Naive thymus-derived CD4-positive, alpha-beta T cell (primary cell): ENCODE measurements at regions of chr2 and their contacts with region 1.

Region 1: DNA sequence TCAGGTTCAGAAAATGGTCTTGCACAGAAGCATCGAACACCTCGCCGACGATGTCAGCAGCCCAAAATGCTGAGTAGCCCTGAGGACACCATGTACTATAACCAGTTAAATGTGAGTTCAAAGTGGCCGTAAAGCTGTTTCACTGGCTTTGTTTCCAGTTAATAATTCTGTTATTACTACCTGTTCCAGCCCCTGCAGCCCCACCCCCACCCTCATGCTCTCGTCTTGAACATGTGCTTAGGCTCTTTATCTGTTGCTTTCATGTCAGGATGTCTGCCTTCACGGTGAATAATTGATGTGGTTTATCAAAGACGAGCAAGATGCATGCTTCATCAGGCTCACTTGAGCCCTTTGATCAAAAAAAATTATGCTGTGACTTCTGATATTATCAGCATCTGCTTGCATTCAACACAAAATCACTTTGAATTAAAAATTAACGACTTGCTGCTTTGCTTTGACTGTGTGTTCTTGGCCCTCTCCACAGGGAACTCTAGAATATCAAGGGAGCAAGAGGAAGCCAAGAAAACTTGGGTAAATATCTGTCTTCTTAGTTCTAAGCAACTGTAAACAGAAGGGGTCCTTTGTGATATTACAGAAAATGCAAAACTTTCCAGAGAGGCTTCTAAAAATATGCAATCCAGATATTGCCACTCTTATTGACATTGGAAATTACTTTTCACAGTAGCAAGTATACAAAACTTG is 63.4 kb upstream of the SP5 start:
- DNase-seq: peak in 7 of 9 donors; percentile 74 to 89 (median 84)
- ATAC-seq: peak; percentile 99
- H3K4me3 ChIP-seq: no peak overlapping the region
- H3K4me3 Mint-ChIP-seq: peak overlapping the region; percentile 44 to 80 (median 64)
- H3K27ac ChIP-seq: no peak overlapping the region
- H3K27ac Mint-ChIP-seq: peak overlapping the region in 7 of 9 donors; percentile 12 to 87 (median 25)
- H3K4me1 ChIP-seq: peaks cover 11 to 23% of the 10 kb centered on the region in 2 donors
- H3K4me1 Mint-ChIP-seq: peaks cover 17 to 35% (median 32%) of the 10 kb centered on the region in 7 donors
- H3K27me3 ChIP-seq: no peaks in the 10 kb centered on the region
- H3K27me3 Mint-ChIP-seq: peaks cover 0 to 20% (median 9%) of the 10 kb centered on the region in 5 donors

Region 2: DNA sequence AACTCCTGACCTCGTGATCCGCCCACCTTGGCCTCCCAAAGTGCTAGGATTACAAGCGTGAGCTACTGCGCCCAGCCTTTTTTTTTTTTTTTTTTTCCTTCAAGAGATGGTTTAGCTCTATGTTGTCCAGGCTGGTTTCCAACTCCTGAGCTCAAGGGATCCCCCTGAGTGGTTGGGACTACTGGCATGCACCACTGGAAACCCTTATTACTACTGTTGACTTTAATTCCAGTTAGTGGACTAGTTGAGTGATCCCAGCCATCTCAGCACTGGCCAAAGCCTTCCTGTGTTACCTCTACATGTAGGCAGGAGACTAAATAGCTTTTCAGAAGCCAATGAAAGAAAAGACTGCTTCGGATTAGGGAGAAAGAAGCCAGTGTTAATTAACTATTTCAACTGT is 861.2 kb before region 1 on chr2:
- CTCF ChIA-PET with region 1: no interaction called
- POLR2A ChIA-PET with region 1: no interaction called
- intact Hi-C with region 1: no loop called
- DNase-seq: no peak
- ATAC-seq: no peak
- H3K4me3 ChIP-seq: no peak overlapping the region
- H3K4me3 Mint-ChIP-seq: no peak overlapping the region
- H3K27ac ChIP-seq: no peak overlapping the region
- H3K27ac Mint-ChIP-seq: no peak overlapping the region
- H3K4me1 ChIP-seq: no peaks in the 10 kb centered on the region
- H3K4me1 Mint-ChIP-seq: peaks cover 4 to 6% (median 6%) of the 10 kb centered on the region in 7 donors
- H3K27me3 ChIP-seq: no peaks in the 10 kb centered on the region
- H3K27me3 Mint-ChIP-seq: peaks cover 25 to 40% (median 27%) of the 10 kb centered on the region in 5 donors

Region 3: GRCh38 chr2:170122883-170123584 is 528.7 kb before region 1 on chr2:
- CTCF ChIA-PET with region 1: no interaction called
- POLR2A ChIA-PET with region 1: no interaction called
- intact Hi-C with region 1: no loop called
- DNase-seq: no peak
- ATAC-seq: no peak
- H3K4me3 ChIP-seq: no peak overlapping the region
- H3K4me3 Mint-ChIP-seq: no peak overlapping the region
- H3K27ac ChIP-seq: no peak overlapping the region
- H3K27ac Mint-ChIP-seq: no peak overlapping the region
- H3K4me1 ChIP-seq: no peaks in the 10 kb centered on the region
- H3K4me1 Mint-ChIP-seq: no peaks in the 10 kb centered on the region
- H3K27me3 ChIP-seq: no peaks in the 10 kb centered on the region
- H3K27me3 Mint-ChIP-seq: peaks cover 4 to 30% (median 14%) of the 10 kb centered on the region in 5 donors

Region 4: DNA sequence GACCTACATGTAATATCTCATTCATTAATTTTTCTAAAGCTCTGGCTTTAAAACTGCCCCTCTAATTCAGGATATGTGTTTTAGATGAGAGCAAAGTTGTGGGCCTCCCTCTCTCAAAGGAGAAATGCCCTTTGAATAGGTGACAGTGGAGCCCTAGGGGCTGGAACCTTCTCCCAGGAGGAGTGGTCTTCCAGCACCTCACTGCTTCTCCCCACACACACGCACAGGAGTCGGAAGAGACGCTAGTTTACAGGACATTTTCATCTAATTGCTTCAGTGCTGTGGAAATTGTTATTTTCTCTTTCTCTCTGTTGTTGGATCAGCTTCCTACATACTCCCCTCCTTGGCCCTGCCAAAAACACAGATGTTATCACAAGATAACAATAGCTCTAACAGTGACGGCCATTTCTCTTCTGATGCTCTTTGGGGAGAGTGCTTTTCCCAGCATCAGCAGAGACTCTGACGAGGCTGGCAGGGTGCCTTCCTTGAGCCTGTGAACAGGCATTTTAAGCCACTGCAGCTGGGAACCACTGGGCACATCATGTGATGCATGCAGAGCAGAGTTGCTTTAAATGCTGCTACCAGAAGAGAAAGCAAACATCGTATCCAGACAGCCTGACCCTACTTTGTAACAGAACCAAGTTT is 146.0 kb before region 1 on chr2:
- CTCF ChIA-PET with region 1: no interaction called
- POLR2A ChIA-PET with region 1: no interaction called
- intact Hi-C with region 1: loop called in 1 of 2 experiments (anchors 2 kb)
- DNase-seq: peak in 1 of 9 donors; percentile 10
- ATAC-seq: no peak
- H3K4me3 ChIP-seq: no peak overlapping the region
- H3K4me3 Mint-ChIP-seq: peak overlapping the region in 3 of 10 donors; percentile 14 to 56 (median 52)
- H3K27ac ChIP-seq: no peak overlapping the region
- H3K27ac Mint-ChIP-seq: peak overlapping the region in 1 of 9 donors; percentile 41
- H3K4me1 ChIP-seq: peaks cover 7 to 25% of the 10 kb centered on the region in 2 donors
- H3K4me1 Mint-ChIP-seq: peaks cover 11 to 43% (median 34%) of the 10 kb centered on the region in 7 donors
- H3K27me3 ChIP-seq: no peaks in the 10 kb centered on the region
- H3K27me3 Mint-ChIP-seq: peaks cover 12 to 54% (median 25%) of the 10 kb centered on the region in 5 donors

Region 5: GRCh38 chr2:170770606-170771420 is 119.0 kb after region 1 on chr2:
- CTCF ChIA-PET with region 1: no interaction called
- POLR2A ChIA-PET with region 1: interaction called, 3 read pairs
- intact Hi-C with region 1: loop called in 1 of 2 experiments (anchors 1 kb)
- DNase-seq: peak; percentile 31 to 77 (median 50)
- ATAC-seq: peak; percentile 91
- H3K4me3 ChIP-seq: peak overlapping the region; percentile 74
- H3K4me3 Mint-ChIP-seq: peak overlapping the region; percentile 77 to 91 (median 84)
- H3K27ac ChIP-seq: peak overlapping the region; percentile 51
- H3K27ac Mint-ChIP-seq: peak overlapping the region in 6 of 9 donors; percentile 27 to 80 (median 55)
- H3K4me1 ChIP-seq: peaks cover 4 to 8% of the 10 kb centered on the region in 2 donors
- H3K4me1 Mint-ChIP-seq: peaks cover 6 to 34% (median 18%) of the 10 kb centered on the region in 7 donors
- H3K27me3 ChIP-seq: no peaks in the 10 kb centered on the region
- H3K27me3 Mint-ChIP-seq: peaks cover 0 to 52% (median 10%) of the 10 kb centered on the region in 5 donors

Region 6: GRCh38 chr2:171568089-171568488 is 916.3 kb after region 1 on chr2:
- CTCF ChIA-PET with region 1: no interaction called
- POLR2A ChIA-PET with region 1: no interaction called
- intact Hi-C with region 1: no loop called
- DNase-seq: no peak
- ATAC-seq: no peak
- H3K4me3 ChIP-seq: no peak overlapping the region
- H3K4me3 Mint-ChIP-seq: no peak overlapping the region
- H3K27ac ChIP-seq: no peak overlapping the region
- H3K27ac Mint-ChIP-seq: no peak overlapping the region
- H3K4me1 ChIP-seq: no peaks in the 10 kb centered on the region
- H3K4me1 Mint-ChIP-seq: no peaks in the 10 kb centered on the region
- H3K27me3 ChIP-seq: no peaks in the 10 kb centered on the region
- H3K27me3 Mint-ChIP-seq: peaks cover 0 to 19% (median 4%) of the 10 kb centered on the region in 5 donors

Region 7: GRCh38 chr2:171793691-171794678 is 1142.2 kb after region 1 on chr2:
- CTCF ChIA-PET with region 1: no interaction called
- POLR2A ChIA-PET with region 1: no interaction called
- intact Hi-C with region 1: no loop called
- DNase-seq: no peak
- ATAC-seq: no peak
- H3K4me3 ChIP-seq: no peak overlapping the region
- H3K4me3 Mint-ChIP-seq: no peak overlapping the region
- H3K27ac ChIP-seq: no peak overlapping the region
- H3K27ac Mint-ChIP-seq: peak overlapping the region in 5 of 9 donors; percentile 11 to 77 (median 45)
- H3K4me1 ChIP-seq: no peaks in the 10 kb centered on the region
- H3K4me1 Mint-ChIP-seq: peaks cover 0 to 17% (median 12%) of the 10 kb centered on the region in 7 donors
- H3K27me3 ChIP-seq: no peaks in the 10 kb centered on the region
- H3K27me3 Mint-ChIP-seq: no peaks in the 10 kb centered on the region